Right lobe of liver (tissue), 6 donors: ENCODE measurements at regions of chr2 and their contacts with region 1.

Region 1: DNA sequence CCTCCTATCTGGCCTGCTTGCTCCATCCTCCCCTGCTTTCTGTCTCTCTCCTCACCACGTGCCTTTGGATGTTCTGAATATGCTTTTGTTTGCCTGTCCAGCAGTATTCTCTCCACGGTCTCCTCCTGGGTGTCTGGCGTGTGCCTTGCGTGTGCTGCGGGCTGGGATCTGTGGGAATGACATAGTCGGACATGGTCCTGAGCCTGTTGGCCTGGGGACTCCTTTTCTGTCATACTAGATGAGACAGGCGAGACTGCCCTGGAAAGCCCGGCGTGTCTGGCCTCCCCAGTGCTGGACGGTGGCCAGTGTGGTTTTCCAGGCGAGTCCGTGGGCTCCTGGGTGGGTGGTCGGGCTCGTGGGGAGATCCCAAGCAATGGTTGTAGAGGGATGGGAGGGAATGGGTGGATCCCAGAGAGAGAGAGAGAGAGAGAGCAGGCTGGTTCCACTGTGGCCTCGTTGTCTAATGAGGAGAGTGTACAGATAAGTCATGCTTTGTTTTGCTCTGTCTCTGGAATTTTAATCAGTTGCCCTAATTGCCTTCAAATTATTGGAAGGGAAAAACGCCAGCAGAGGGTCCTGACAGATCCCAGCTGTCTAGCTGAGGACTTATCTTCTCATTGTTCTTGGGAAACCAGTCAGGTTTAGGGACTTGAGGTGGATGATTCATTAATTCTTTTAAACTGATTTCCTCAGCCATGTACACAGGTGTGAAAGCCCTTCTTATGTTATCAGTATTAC is 58.3 kb downstream of the HPCAL1 start:
- DNase-seq: no peak
- ATAC-seq: no peak
- H3K4me3 ChIP-seq: no peak overlapping the region
- H3K27ac ChIP-seq: no peak overlapping the region
- H3K4me1 ChIP-seq: peaks cover 0 to 25% (median 5%) of the 10 kb centered on the region in 4 donors
- H3K27me3 ChIP-seq: no peaks in the 10 kb centered on the region
- CTCF ChIP-seq: no peak
- POLR2A ChIP-seq: no peak

Region 2: GRCh38 chr2:10302479-10303180 is 58.4 kb before region 1 on chr2 and contains the start of gene HPCAL1:
- intact Hi-C with region 1: loop called in 1 of 2 experiments (anchors 10 kb)
- DNase-seq: peak; percentile 97 to 99 (median 98)
- ATAC-seq: peak; percentile 76 to 93 (median 86)
- H3K4me3 ChIP-seq: peak within 1 kb of the TSS; percentile 77 to 90 (median 90)
- H3K27ac ChIP-seq: peak within 1 kb of the TSS; percentile 88 to 93 (median 93)
- H3K4me1 ChIP-seq: peaks cover 0 to 34% (median 10%) of the 10 kb centered on the region in 4 donors
- H3K27me3 ChIP-seq: no peaks in the 10 kb centered on the region
- CTCF ChIP-seq: peak; percentile 47 to 62 (median 52)
- POLR2A ChIP-seq: peak; percentile 98
- total RNA-seq, gene HPCAL1: 23.1 to 68.8 (median 29.1) TPM